Common myeloid progenitor, CD34-positive (primary cell): ENCODE measurements at regions of chr12 and their contacts with region 1.

Region 1: GRCh38 chr12:24991209-24992049 is 42.5 kb upstream of the BCAT1 start:
- DNase-seq: peak; percentile 69 to 86 (median 82)
- H3K4me3 ChIP-seq: no peak overlapping the region
- H3K27ac ChIP-seq: no peak overlapping the region
- H3K4me1 ChIP-seq: no peaks in the 10 kb centered on the region
- H3K27me3 ChIP-seq: no peaks in the 10 kb centered on the region

Region 2: DNA sequence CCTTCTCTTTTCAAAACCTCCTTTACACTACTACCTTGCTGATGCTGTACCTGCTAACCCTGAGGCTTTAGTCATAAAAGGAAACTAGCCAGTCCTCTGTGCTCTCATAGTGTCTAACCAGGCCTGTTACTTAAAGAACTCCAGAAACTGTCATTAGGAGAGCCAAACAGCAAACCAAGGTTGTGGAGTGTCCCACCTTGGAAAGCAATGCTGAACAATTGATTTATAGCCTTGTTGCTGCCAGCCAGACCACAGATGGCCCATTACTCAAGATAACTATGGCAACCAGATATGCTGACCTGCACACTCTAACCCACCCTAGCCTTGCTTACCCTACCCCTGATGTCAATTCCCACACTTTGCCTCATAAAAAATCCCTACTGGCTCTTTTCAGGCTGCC is 16.0 kb before region 1 on chr12:
- CTCF ChIA-PET with region 1: no interaction called
- POLR2A ChIA-PET with region 1: no interaction called
- DNase-seq: peak in 1 of 3 donors; percentile 3
- H3K4me3 ChIP-seq: no peak overlapping the region
- H3K27ac ChIP-seq: no peak overlapping the region
- H3K4me1 ChIP-seq: peaks cover 0 to 14% (median 4%) of the 10 kb centered on the region in 4 experiments
- H3K27me3 ChIP-seq: no peaks in the 10 kb centered on the region

Region 3: DNA sequence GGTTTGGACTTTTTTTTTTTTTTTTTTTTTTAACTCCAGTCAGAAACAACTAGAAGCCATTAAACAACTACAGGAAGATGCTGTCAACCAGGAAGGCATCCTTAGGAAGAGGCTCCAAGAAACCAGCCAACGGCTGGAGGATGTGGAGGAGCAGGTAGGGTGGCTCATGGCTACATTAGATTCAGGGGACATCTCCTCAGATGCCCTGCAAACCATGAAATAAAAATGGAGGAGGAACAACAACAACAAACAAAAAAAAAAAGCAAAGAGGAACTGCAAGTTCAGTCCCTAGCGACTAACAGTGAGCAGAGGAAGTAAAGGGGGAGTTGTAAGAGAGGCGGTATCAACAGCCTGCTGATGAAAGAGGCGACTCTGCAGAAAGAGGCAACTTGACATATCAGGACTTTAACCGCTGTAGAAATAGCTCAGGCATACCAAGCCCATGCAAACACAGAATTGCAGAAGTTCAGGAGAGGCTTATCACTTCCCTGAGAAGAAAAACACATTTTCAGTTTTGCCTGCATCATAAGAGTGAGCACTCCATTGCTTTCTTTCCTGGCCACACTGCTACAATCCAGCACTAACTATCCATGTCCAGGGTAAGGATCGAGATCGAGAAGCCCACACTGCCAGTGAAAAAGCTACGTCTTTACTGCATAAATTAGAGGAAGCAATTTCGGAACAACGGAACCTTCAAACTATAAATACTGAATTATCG is 60.9 kb after region 1 on chr12:
- CTCF ChIA-PET with region 1: interaction called, 10 read pairs
- POLR2A ChIA-PET with region 1: interaction called, 3 read pairs
- DNase-seq: peak; percentile 93 to 98 (median 96)
- H3K4me3 ChIP-seq: peak overlapping the region in 6 of 7 experiments; percentile 79 to 99 (median 88)
- H3K27ac ChIP-seq: peak overlapping the region; percentile 78 to 93
- H3K4me1 ChIP-seq: peaks cover 31 to 51% (median 41%) of the 10 kb centered on the region in 4 experiments
- H3K27me3 ChIP-seq: no peaks in the 10 kb centered on the region

Region 4: DNA sequence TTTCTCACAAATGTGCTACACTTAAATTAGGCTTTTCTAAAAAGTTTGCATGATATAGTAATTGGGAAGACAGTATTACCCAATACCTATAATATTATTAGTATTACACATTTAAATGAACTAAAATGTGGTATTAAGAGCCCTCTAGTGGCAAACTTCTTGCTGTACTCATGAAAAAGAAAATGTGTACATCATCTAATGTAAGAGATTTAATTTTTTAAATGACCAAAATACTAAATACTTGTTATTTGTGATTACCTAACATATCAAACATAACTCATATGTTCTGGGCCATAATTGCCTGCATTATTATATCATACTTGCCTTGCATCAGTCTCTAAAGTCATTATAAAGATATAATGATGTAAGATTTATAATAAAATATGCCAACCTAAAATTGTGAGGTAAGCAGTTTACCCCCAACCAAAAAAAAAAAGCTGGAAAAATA is 139.3 kb after region 1 on chr12:
- CTCF ChIA-PET with region 1: interaction called, 70 read pairs
- POLR2A ChIA-PET with region 1: no interaction called
- DNase-seq: peak; percentile 43 to 65 (median 61)
- H3K4me3 ChIP-seq: no peak overlapping the region
- H3K27ac ChIP-seq: no peak overlapping the region
- H3K4me1 ChIP-seq: no peaks in the 10 kb centered on the region
- H3K27me3 ChIP-seq: no peaks in the 10 kb centered on the region

Region 5: DNA sequence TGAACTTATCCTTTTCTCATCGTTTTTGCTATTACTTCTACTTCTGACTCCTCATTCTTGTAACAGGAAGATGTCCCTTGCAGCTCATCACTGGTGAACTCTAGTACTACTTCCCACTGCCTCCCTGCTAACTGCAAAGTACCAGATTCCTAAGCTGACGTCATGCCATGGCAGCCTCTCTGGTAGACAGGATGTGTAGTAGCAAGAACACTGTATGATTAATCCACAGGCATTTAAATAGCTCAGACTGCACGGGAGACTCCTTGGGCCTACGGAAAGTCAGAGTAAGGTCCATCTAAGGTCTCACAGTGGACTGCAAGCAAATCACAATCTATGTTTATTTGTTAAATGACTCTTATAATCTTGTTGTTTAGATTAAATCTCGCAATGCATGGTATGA is 160.0 kb after region 1 on chr12:
- CTCF ChIA-PET with region 1: interaction called, 11 read pairs
- POLR2A ChIA-PET with region 1: no interaction called
- DNase-seq: peak in 1 of 3 donors; percentile 12
- H3K4me3 ChIP-seq: no peak overlapping the region
- H3K27ac ChIP-seq: no peak overlapping the region
- H3K4me1 ChIP-seq: peaks cover 0 to 4% (median 0%) of the 10 kb centered on the region in 4 experiments
- H3K27me3 ChIP-seq: no peaks in the 10 kb centered on the region